WTC11 (cell line): ENCODE measurements at regions of chr17 and their contacts with region 1.

Region 1: GRCh38 chr17:8300627-8301242 is 5.5 kb upstream of the SLC25A35 start:
- DNase-seq: peak; percentile 57
- ATAC-seq: peak; percentile 98
- H3K4me3 Mint-ChIP-seq: peak overlapping the region; percentile 41
- H3K27ac Mint-ChIP-seq: no peak overlapping the region; the same call in 1 of the 2 replicates
- H3K4me1 Mint-ChIP-seq: peaks cover 6% of the 10 kb centered on the region; the same call in 1 of the 2 replicates
- H3K27me3 Mint-ChIP-seq: no peaks in the 10 kb centered on the region
- CTCF ChIP-seq: peak; percentile 80

Region 2: GRCh38 chr17:8277317-8277716 is 23.4 kb before region 1 on chr17:
- CTCF ChIA-PET with region 1: interaction called, 10 read pairs
- POLR2A ChIA-PET with region 1: interaction called, 3 read pairs
- DNase-seq: no peak
- ATAC-seq: no peak
- H3K4me3 Mint-ChIP-seq: no peak overlapping the region
- H3K27ac Mint-ChIP-seq: no peak overlapping the region
- H3K4me1 Mint-ChIP-seq: no peaks in the 10 kb centered on the region
- H3K27me3 Mint-ChIP-seq: peaks cover 5% of the 10 kb centered on the region; the same call in 1 of the 2 replicates
- CTCF ChIP-seq: no peak

Region 3: DNA sequence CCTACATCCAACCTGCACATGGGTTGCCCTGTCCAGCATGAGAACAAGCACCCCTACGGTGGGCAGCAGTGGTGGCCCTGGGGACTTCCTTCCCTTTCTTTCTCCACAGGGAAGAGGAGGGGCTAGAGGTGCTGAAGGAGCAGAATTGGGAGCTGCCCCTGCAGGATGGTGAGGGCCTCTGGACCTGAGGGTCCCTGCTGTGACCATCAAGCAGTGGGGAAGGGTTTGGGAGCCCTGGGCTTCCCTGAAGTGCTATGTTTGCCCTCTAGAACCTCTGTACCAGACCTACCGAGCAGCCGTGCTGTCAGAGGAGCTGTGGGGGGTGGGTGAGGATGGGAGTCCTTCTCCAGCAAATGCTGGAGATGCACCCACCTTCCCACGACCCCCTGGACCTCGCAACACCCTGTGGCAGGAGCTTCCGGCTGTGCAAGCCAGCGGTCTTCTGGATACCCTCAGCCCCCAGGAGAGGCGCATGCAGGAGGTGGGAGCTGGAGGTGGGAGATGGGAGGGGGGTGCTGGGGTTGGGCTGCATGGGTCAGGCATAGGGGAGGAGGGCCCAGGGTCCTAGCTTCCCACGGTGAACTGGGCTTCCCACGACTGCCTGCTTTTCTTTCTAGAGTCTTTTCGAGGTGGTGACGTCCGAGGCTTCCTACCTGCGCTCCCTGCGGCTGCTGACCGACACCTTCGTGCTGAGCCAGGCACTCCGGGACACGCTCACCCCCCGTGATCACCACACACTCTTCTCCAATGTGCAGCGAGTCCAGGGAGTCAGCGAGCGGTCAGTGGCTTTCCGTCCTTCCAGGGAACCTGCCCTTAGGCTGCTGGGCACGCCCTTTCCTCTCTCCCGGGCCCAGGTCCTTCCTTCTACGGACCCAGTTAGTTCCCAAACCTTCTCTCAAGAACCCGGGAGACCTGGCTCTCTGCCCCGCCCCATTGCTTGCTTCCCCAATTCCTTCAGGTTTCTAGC is 14.3 kb after region 1 on chr17:
- CTCF ChIA-PET with region 1: interaction called, 13 read pairs
- POLR2A ChIA-PET with region 1: no interaction called
- DNase-seq: peak; percentile 35
- ATAC-seq: peak; percentile 35
- H3K4me3 Mint-ChIP-seq: peak overlapping the region; percentile 88
- H3K27ac Mint-ChIP-seq: no peak overlapping the region
- H3K4me1 Mint-ChIP-seq: peaks cover 34% of the 10 kb centered on the region
- H3K27me3 Mint-ChIP-seq: peaks cover 35% of the 10 kb centered on the region
- CTCF ChIP-seq: no peak